PC-9 (cell line): ENCODE measurements at regions of chr15 and their contacts with region 1.

Region 1: DNA sequence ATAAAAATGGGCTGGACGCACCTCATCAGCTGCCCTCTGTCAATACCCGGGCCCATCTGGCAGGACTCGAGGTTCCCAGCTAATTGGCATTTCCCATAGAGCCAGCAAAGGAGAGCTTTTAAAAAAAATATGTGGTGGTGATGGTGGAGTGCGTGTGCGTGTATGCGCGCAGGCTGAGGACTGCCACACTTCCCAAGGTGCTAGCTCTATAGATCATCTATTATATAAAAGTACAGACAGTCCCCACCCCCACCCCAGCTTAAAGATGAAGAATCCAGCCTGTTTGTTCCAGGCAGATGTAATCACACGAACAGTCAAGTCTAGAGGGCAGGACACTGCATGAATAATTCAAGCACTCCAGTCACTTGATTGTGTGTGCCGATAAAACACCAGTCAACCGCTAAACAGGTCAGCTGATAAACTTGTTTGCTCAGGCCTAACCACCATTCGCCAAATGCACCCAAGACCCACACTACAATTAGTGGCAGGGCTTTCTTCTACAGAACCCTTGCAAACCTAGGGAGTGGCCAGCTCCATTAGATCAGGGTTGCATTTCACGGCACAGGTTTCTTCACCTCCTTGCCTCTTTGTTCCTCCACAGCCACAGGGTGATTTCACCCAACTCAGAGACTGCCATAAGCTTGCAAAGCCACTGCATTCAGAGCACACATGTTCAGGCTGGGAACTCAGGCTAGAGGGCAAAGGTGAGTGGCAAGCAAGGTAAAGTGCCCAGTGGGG is 5.8 kb downstream of the TLE3 start:
- DNase-seq: peak; percentile 62 to 88
- H3K4me3 ChIP-seq: peak overlapping the region; percentile 84; the same call in 1 of the 2 replicates
- H3K27ac ChIP-seq: 0 out of 2 replicates have a peak overlapping the region, but pooled peaks have one; percentile 82
- H3K4me1 ChIP-seq: peaks cover 43% of the 10 kb centered on the region
- H3K27me3 ChIP-seq: no peaks in the 10 kb centered on the region
- CTCF ChIP-seq: no peak

Region 2: GRCh38 chr15:69593981-69594966 is 497.6 kb before region 1 on chr15:
- CTCF ChIA-PET with region 1: no interaction called
- POLR2A ChIA-PET with region 1: no interaction called
- intact Hi-C with region 1: loop called (anchors 5 kb)
- DNase-seq: peak; percentile 83 to 98
- H3K4me3 ChIP-seq: peak overlapping the region; percentile 5; the same call in 1 of the 2 replicates
- H3K27ac ChIP-seq: peak overlapping the region; percentile 85
- H3K4me1 ChIP-seq: peaks cover 49% of the 10 kb centered on the region
- H3K27me3 ChIP-seq: peaks cover 27% of the 10 kb centered on the region
- CTCF ChIP-seq: no peak

Region 3: DNA sequence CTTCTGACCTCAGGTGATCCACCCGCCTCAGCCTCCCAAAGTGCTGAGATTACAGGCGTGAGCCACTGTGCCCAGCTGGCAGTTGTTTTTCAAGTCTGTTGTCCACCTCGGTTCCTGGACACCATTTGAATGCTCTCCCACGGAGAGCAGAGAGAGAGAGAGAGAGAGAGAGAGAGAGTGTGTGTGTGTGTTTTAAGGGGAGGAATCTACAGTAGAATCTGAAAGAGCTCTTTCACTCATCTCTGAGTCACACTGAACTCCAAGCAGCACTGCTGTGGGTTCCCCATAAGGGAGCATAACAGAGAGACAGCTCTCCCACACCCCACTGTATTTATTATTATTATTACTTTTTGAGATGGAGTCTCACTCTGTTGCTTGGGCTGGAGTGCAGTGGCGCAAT is 482.7 kb before region 1 on chr15:
- CTCF ChIA-PET with region 1: interaction called, 10 read pairs
- POLR2A ChIA-PET with region 1: no interaction called
- intact Hi-C with region 1: no loop called
- DNase-seq: peak; percentile 9 to 71
- H3K4me3 ChIP-seq: no peak overlapping the region
- H3K27ac ChIP-seq: no peak overlapping the region
- H3K4me1 ChIP-seq: peaks cover 14% of the 10 kb centered on the region; the same call in 1 of the 2 replicates
- H3K27me3 ChIP-seq: no peaks in the 10 kb centered on the region
- CTCF ChIP-seq: no peak

Region 4: DNA sequence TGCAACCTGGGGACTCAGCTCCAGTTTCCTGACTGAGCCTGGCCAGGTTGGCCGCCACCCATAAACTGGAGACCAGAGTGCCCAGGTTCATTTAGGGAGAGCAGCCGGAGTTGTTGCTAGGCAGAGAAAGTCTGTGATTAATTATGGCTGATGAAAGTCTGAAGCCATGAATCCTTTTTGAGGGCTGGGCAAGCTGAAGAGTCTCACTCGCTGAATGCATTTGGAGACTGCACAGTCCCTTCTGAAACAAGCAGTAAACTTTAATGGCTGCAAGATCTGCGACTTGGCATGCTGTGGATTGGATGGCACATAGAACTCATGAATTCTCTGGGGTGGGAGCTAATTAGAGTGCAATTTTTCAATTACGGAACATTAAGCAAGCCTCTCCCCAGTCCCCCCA is 357.2 kb before region 1 on chr15:
- CTCF ChIA-PET with region 1: no interaction called
- POLR2A ChIA-PET with region 1: no interaction called
- intact Hi-C with region 1: loop called (anchors 5 kb)
- DNase-seq: no peak
- H3K4me3 ChIP-seq: no peak overlapping the region
- H3K27ac ChIP-seq: no peak overlapping the region
- H3K4me1 ChIP-seq: peaks cover 19% of the 10 kb centered on the region
- H3K27me3 ChIP-seq: no peaks in the 10 kb centered on the region
- CTCF ChIP-seq: no peak

Region 5: DNA sequence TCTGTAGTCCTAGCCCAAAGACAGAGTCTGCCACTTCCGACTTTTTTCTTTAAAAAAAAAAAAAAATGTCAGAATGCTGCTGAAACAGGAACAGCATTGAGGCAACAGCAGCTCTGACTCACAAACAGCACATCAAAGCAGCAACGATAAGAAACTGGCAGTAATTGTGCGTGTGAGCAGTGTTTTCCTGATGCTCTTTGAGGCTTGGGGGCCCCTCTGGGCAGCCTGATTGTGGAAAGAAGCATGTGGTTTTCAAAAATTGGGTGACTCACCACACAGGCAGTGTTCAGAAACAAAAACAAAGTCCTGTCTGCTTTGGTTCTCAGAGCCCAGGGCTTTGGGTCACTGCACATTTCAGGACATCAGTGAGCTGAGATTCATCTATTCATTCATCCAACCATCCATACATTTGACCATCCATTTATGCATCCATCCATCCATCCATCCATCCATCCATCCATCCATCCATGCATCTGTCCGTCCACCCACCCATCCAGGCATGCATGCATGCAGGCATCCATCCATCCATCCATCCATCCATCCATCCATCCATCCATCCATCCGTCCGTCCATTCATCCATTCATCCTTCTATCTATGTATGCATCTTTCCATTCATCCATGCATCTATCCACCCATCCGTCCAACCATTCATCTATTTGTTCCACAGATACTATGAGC is 330.9 kb before region 1 on chr15:
- CTCF ChIA-PET with region 1: no interaction called
- POLR2A ChIA-PET with region 1: no interaction called
- intact Hi-C with region 1: loop called (anchors 2 kb)
- DNase-seq: peak; percentile 79 to 95
- H3K4me3 ChIP-seq: no peak overlapping the region
- H3K27ac ChIP-seq: peak overlapping the region; percentile 51
- H3K4me1 ChIP-seq: peaks cover 49% of the 10 kb centered on the region
- H3K27me3 ChIP-seq: no peaks in the 10 kb centered on the region
- CTCF ChIP-seq: no peak

Region 6: DNA sequence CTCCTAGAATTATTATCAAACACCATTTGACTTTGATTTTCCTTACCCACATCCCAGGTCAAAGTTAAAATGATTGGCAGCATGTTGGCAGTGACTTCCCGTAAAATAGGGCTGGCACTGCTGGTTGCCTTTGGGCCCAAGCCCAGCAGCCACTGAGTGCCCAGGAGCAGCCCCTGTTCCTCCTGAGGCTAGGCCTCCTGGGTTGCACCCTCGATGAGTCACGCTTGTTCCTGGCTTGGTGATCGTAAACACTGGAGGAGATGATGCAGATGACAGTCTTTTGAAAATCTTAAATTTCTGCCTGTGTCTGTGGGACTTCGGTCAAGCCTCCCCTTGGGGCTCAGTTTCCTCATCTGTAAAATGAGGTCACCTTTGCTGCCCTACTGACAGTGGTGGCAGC is 284.1 kb before region 1 on chr15:
- CTCF ChIA-PET with region 1: no interaction called
- POLR2A ChIA-PET with region 1: no interaction called
- intact Hi-C with region 1: loop called (anchors 5 kb)
- DNase-seq: peak; percentile 68 to 74
- H3K4me3 ChIP-seq: no peak overlapping the region
- H3K27ac ChIP-seq: no peak overlapping the region
- H3K4me1 ChIP-seq: peaks cover 30% of the 10 kb centered on the region
- H3K27me3 ChIP-seq: no peaks in the 10 kb centered on the region
- CTCF ChIP-seq: no peak

Region 7: DNA sequence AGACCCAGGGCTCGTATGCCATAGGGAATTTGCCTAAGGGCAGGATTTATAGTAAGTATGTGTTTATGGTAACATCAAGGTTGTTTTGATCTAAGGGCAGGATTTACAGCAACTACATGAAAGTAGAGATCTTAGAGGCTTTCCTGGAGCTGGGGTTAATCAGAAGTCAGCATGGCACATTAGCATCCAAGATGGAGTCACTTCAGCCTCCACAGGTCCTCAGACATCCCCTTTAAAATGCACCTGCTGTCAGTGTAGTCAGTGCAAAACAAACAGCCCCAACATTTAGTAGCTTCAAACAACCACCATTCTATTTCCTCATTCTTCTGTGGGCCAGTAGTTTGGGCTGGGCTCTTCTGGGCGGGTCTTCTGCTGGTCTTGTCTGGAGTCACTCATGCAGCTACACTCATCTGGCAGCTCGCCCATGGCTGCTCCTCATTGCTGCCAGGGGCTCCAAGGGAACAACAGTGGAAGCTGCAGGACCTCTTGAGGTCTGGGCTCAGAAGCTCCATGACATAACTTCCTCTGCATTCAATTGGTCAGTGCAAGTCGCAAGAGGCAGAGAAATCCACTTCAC is 94.1 kb before region 1 on chr15:
- CTCF ChIA-PET with region 1: no interaction called
- POLR2A ChIA-PET with region 1: interaction called, 3 read pairs
- intact Hi-C with region 1: loop called (anchors 5 kb)
- DNase-seq: peak; percentile 91 to 94
- H3K4me3 ChIP-seq: no peak overlapping the region
- H3K27ac ChIP-seq: no peak overlapping the region
- H3K4me1 ChIP-seq: peaks cover 19% of the 10 kb centered on the region
- H3K27me3 ChIP-seq: no peaks in the 10 kb centered on the region
- CTCF ChIP-seq: no peak